CD8-positive, alpha-beta memory T cell (primary cell): ENCODE measurements at regions of chr15 and their contacts with region 1.

Region 1: GRCh38 chr15:90126457-90127435 is 24.5 kb upstream of the IDH2 start:
- DNase-seq: no peak
- H3K4me3 ChIP-seq: no peak overlapping the region
- H3K4me3 Mint-ChIP-seq: no peak overlapping the region
- H3K27ac ChIP-seq: no peak overlapping the region
- H3K27ac Mint-ChIP-seq: no peak overlapping the region
- H3K4me1 ChIP-seq: no peaks in the 10 kb centered on the region
- H3K4me1 Mint-ChIP-seq: no peaks in the 10 kb centered on the region
- H3K27me3 ChIP-seq: no peaks in the 10 kb centered on the region
- H3K27me3 Mint-ChIP-seq: peaks cover 4 to 12% of the 10 kb centered on the region in 2 donors

Region 2: GRCh38 chr15:90160842-90161727 is 34.3 kb after region 1 on chr15:
- CTCF ChIA-PET with region 1: no interaction called
- POLR2A ChIA-PET with region 1: no interaction called
- DNase-seq: no peak
- H3K4me3 ChIP-seq: no peak overlapping the region
- H3K4me3 Mint-ChIP-seq: no peak overlapping the region
- H3K27ac ChIP-seq: peak overlapping the region; percentile 19
- H3K27ac Mint-ChIP-seq: no peak overlapping the region
- H3K4me1 ChIP-seq: no peaks in the 10 kb centered on the region
- H3K4me1 Mint-ChIP-seq: peaks cover 7 to 13% (median 8%) of the 10 kb centered on the region in 3 donors
- H3K27me3 ChIP-seq: no peaks in the 10 kb centered on the region
- H3K27me3 Mint-ChIP-seq: peaks cover 4 to 12% of the 10 kb centered on the region in 2 donors

Region 3: DNA sequence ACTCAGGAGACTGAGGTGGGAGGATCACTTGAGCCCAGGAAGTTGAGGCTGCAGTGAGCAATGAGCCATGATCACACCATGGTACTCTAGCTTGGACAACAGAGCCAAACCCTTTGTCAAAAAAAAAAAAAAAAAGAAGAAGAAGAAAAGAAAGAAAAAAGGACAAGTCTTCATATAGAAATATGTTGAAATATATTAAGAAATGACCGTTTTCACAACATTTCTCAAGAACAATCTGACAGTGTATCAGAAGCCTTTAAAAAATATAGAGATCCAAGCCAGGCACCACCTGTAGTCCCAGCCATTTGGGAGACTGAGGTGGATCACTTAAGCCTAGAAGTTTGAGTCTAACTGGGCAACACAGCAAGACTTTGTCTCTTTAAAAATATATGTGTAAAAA is 44.9 kb after region 1 on chr15:
- CTCF ChIA-PET with region 1: no interaction called
- POLR2A ChIA-PET with region 1: interaction called, 18 read pairs
- DNase-seq: no peak
- H3K4me3 ChIP-seq: no peak overlapping the region
- H3K4me3 Mint-ChIP-seq: no peak overlapping the region
- H3K27ac ChIP-seq: no peak overlapping the region
- H3K27ac Mint-ChIP-seq: no peak overlapping the region
- H3K4me1 ChIP-seq: no peaks in the 10 kb centered on the region
- H3K4me1 Mint-ChIP-seq: peaks cover 0 to 3% (median 0%) of the 10 kb centered on the region in 3 donors
- H3K27me3 ChIP-seq: no peaks in the 10 kb centered on the region
- H3K27me3 Mint-ChIP-seq: peaks cover 0 to 3% of the 10 kb centered on the region in 2 donors